MCF 10A (cell line): ENCODE measurements at regions of chr5 and their contacts with region 1.

Region 1: GRCh38 chr5:43839218-43839617 is 236.2 kb downstream of the NNT start:
- DNase-seq: peak; percentile 58
- H3K4me3 Mint-ChIP-seq: no peak overlapping the region
- H3K27ac Mint-ChIP-seq: peak overlapping the region; percentile 77
- H3K4me1 Mint-ChIP-seq: peaks cover 33% of the 10 kb centered on the region
- H3K27me3 Mint-ChIP-seq: no peaks in the 10 kb centered on the region
- CTCF ChIP-seq: no peak

Region 2: GRCh38 chr5:43699910-43700309 is 139.3 kb before region 1 on chr5:
- CTCF ChIA-PET with region 1: no interaction called
- POLR2A ChIA-PET with region 1: no interaction called
- intact Hi-C with region 1: no loop called
- DNase-seq: no peak
- H3K4me3 Mint-ChIP-seq: no peak overlapping the region
- H3K27ac Mint-ChIP-seq: no peak overlapping the region
- H3K4me1 Mint-ChIP-seq: no peaks in the 10 kb centered on the region
- H3K27me3 Mint-ChIP-seq: no peaks in the 10 kb centered on the region
- CTCF ChIP-seq: no peak

Region 3: GRCh38 chr5:43729846-43730478 is 109.3 kb before region 1 on chr5:
- CTCF ChIA-PET with region 1: no interaction called
- POLR2A ChIA-PET with region 1: no interaction called
- intact Hi-C with region 1: loop called (anchors 10 kb)
- DNase-seq: peak; percentile 46
- H3K4me3 Mint-ChIP-seq: no peak overlapping the region
- H3K27ac Mint-ChIP-seq: no peak overlapping the region
- H3K4me1 Mint-ChIP-seq: peaks cover 7% of the 10 kb centered on the region
- H3K27me3 Mint-ChIP-seq: no peaks in the 10 kb centered on the region
- CTCF ChIP-seq: peak; percentile 59

Region 4: DNA sequence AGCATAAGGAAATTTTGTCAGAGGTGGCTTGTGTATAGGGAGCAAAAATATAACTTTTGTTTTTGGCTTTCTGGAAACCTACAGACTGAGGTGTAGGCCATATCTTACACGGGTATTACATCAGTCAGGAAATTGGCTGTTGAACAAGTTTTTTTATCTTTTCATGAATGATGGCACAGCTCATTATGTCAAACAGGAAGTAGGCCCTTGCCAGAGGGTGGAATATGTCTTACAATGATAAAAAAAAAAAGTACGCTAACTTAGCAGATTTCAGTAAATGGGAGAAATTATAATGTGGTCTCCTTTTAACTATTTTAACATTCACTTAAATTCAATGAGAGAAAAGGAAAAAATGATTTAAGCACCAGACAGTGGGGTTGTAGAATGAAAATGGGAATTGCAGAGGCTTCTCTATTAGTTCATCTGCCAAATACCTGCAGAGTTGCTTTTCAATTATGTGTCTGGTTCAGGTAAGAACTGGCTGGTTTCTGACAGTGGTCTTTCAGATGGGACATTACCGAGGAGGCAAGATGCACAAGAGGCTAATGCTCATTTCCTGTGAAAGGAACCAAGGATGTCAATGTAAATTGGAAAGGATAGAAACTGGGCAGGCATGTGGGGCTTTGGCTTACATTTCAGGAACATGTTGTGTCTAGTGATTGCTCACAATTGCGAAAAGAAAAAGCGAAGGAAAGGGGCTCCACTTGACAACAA is 66.3 kb before region 1 on chr5:
- CTCF ChIA-PET with region 1: no interaction called
- POLR2A ChIA-PET with region 1: no interaction called
- intact Hi-C with region 1: loop called (anchors 1 kb)
- DNase-seq: peak; percentile 87
- H3K4me3 Mint-ChIP-seq: peak overlapping the region; percentile 61
- H3K27ac Mint-ChIP-seq: peak overlapping the region; percentile 98
- H3K4me1 Mint-ChIP-seq: peaks cover 32% of the 10 kb centered on the region
- H3K27me3 Mint-ChIP-seq: no peaks in the 10 kb centered on the region
- CTCF ChIP-seq: no peak

Region 5: GRCh38 chr5:44665101-44665701 is 826.0 kb after region 1 on chr5:
- CTCF ChIA-PET with region 1: no interaction called
- POLR2A ChIA-PET with region 1: no interaction called
- intact Hi-C with region 1: no loop called
- DNase-seq: peak; percentile 88
- H3K4me3 Mint-ChIP-seq: no peak overlapping the region
- H3K27ac Mint-ChIP-seq: peak overlapping the region; percentile 1
- H3K4me1 Mint-ChIP-seq: peaks cover 9% of the 10 kb centered on the region
- H3K27me3 Mint-ChIP-seq: no peaks in the 10 kb centered on the region
- CTCF ChIP-seq: no peak